AG04449 (cell line): ENCODE measurements at regions of chr14 and their contacts with region 1.

Region 1: DNA sequence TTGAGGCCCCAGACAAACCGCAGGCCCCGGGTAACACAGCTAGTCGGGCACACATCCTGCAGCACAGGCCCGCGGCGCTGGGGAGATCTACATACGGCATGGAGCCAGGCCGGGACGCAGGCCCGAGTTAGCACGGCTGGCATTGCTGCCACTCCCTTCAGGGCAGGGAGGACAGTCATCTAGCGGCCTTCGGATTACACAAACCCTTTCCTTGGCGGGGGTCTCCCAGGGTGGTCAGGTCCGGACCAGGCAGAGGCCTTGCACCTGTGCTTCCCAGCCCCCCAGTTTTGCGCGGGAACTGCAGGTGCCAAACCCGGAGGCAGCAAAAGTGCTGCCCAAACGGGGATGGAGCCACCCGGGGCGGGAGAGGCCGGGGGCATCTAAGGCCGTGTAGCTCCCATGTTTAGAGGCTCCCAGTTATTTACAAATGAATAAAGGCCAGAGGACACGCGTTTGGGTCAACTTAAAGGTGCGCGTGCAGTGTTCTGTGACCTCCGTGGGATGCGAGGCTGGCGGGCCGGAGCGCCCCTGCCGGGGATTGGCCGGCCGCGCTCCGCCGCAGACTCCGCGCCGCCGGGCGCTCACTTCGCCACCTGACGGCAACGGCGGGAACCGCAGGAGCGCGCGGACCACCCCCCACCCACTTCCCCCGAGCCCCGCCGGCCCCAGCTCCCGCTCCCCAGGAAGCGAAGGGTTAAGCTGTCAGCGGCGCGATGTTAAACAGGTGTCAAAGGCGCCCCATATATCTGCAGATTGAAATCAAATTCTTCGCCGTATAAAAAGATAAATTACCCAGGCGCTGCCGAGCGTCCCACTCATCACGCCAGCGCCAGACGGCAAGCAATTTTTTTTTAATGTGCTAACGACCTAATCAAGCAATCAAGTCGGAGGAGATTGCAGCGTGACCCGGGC is 18.1 kb downstream of the VSX2 start:
- DNase-seq: no peak
- H3K4me3 ChIP-seq: peak overlapping the region; percentile 58
- CTCF ChIP-seq: peak; percentile 80

Region 2: DNA sequence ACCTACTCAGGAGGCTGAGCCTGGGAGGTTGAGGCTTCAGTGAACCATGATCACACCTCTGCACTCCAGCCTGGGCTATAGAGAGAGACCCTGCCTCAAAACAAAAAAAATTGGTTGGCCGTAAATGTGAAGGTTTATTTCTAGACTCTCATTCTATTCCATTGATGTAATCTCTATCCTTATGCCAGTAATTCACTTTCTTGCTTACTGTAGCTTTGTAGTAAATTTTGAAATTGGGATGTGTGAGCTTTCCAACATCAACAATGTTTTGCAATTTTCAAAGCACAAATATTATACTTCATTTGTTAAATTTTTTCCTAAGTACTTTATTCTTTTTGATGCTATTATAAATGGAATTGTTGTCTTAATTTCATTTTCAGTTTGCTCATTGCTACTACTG is 148.0 kb before region 1 on chr14:
- CTCF ChIA-PET with region 1: interaction called, 150 read pairs
- POLR2A ChIA-PET with region 1: interaction called, 3 read pairs
- DNase-seq: no peak
- H3K4me3 ChIP-seq: no peak overlapping the region
- CTCF ChIP-seq: no peak

Region 3: GRCh38 chr14:74147571-74147970 is 109.8 kb before region 1 on chr14:
- CTCF ChIA-PET with region 1: interaction called, 11 read pairs
- POLR2A ChIA-PET with region 1: no interaction called
- DNase-seq: no peak
- H3K4me3 ChIP-seq: no peak overlapping the region
- CTCF ChIP-seq: no peak

Region 4: GRCh38 chr14:74217672-74218448 is 39.5 kb before region 1 on chr14:
- CTCF ChIA-PET with region 1: interaction called, 20 read pairs
- POLR2A ChIA-PET with region 1: no interaction called
- DNase-seq: no peak
- H3K4me3 ChIP-seq: no peak overlapping the region; the same call in 1 of the 2 replicates
- CTCF ChIP-seq: peak; percentile 97

Region 5: DNA sequence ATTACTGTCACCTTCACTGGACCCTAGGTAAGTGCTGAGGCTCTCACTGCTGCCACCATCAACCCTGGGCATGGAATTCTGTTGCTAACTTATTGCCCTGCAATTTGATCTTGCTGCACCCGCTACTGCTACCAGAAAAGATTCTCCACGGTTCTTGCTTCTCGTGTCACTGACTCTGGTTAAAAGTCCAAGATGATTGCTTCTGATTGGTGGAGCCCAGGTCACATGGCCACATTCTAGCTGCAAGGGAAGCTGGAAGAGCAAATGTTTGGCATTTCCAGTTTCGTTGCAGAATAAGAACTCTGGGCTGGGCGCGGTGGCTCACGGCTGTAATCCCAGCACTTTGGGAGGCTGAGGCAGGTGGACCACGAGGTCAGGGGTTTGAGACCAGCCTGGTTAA is 25.6 kb before region 1 on chr14:
- CTCF ChIA-PET with region 1: interaction called, 17 read pairs
- POLR2A ChIA-PET with region 1: no interaction called
- DNase-seq: no peak
- H3K4me3 ChIP-seq: no peak overlapping the region
- CTCF ChIP-seq: no peak

Region 6: DNA sequence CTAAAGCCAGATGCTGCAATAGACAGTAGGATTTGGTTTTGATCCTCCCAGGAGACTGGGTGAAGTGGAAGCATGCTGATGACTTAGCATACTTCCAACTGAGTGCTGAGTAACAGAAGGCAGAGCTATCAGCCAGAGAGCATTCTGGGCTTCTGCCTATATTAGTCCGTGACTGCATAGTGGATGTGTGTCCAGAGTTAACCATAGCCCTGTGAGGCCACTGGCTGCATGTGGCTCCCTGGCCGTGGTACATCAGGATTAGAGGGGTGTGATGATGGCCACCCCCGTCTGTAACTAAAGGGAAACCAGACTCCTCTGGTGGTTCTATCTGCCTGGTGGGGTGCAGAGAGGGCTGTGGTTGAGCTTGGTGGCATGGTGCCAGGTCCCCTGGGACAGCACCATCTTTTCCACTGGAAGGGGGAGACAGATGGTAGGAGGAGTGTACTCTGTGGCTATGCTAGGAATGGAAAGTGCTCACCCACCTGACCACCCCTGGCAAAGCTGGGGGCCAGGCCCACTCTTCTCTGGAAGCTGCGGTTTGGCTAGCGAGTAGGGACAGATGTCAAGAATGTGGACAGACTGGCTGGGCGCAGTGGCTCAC is 18.0 kb after region 1 on chr14:
- CTCF ChIA-PET with region 1: interaction called, 101 read pairs
- POLR2A ChIA-PET with region 1: no interaction called
- DNase-seq: peak; percentile 59
- H3K4me3 ChIP-seq: no peak overlapping the region
- CTCF ChIP-seq: no peak

Region 7: GRCh38 chr14:74290415-74290814 is 33.1 kb after region 1 on chr14:
- CTCF ChIA-PET with region 1: interaction called, 11 read pairs
- POLR2A ChIA-PET with region 1: interaction called, 5 read pairs
- DNase-seq: no peak
- H3K4me3 ChIP-seq: no peak overlapping the region
- CTCF ChIP-seq: peak; percentile 32